ENCODE measurements at regions of chr1 and their contacts with region 1.

Region 1: GRCh38 chr1:220281159-220281574 is 8.9 kb upstream of the RAB3GAP2 start:
- DNase-seq: no peak
- ATAC-seq: peak; percentile 86
- H3K4me3 Mint-ChIP-seq: no peak overlapping the region
- H3K27ac Mint-ChIP-seq: no peak overlapping the region
- H3K4me1 Mint-ChIP-seq: no peaks in the 10 kb centered on the region
- H3K27me3 Mint-ChIP-seq: no peaks in the 10 kb centered on the region
- CTCF ChIP-seq: no peak

Region 2: DNA sequence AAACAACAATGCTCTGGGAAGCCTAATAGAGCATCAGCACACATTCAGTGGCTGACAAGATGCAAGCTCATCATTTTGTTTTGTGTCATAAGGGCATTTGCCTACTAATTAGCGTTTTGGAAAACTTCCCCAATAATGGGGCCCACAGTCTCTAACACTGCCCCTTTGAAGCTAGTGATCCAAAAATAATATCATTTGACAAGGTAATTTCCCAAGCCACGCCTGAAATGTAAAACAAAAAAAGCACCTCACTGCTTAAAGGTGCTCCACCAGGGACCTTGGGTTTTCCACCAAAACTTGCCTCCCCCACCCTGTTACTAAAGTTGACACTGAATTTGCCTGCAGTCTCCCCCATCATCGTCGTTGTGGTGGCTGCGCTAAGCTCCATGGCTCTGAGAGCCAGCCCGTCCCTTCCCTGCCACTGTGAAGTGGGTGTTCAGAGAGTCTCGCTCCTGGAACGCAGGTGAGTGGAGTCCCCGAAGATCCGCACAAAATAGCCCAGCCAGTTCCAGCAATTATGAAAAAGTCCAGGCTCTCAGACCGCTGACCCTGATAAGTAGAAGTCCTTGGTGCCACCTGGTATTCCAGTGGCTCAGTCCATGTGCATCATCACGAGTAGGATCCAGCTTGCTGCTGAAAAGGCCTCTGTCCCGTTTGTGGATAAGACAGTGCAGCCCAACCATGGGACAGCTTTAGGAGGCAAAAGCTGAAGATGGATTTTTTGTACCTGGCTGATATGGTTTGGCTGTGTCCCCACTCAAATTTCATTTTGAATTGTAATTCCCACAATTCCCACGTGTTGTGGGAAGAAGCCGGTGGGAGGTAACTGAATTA is 61.1 kb before region 1 on chr1:
- CTCF ChIA-PET with region 1: interaction called, 25 read pairs
- POLR2A ChIA-PET with region 1: no interaction called
- DNase-seq: no peak
- ATAC-seq: no peak
- H3K4me3 Mint-ChIP-seq: no peak overlapping the region
- H3K27ac Mint-ChIP-seq: peak overlapping the region; percentile 88
- H3K4me1 Mint-ChIP-seq: peaks cover 42% of the 10 kb centered on the region
- H3K27me3 Mint-ChIP-seq: no peaks in the 10 kb centered on the region
- CTCF ChIP-seq: no peak

Region 3: GRCh38 chr1:220294846-220295301 is 13.7 kb after region 1 on chr1:
- CTCF ChIA-PET with region 1: interaction called, 38 read pairs
- POLR2A ChIA-PET with region 1: no interaction called
- DNase-seq: no peak
- ATAC-seq: no peak
- H3K4me3 Mint-ChIP-seq: no peak overlapping the region
- H3K27ac Mint-ChIP-seq: no peak overlapping the region
- H3K4me1 Mint-ChIP-seq: peaks cover 37% of the 10 kb centered on the region
- H3K27me3 Mint-ChIP-seq: no peaks in the 10 kb centered on the region
- CTCF ChIP-seq: no peak

Region 4: DNA sequence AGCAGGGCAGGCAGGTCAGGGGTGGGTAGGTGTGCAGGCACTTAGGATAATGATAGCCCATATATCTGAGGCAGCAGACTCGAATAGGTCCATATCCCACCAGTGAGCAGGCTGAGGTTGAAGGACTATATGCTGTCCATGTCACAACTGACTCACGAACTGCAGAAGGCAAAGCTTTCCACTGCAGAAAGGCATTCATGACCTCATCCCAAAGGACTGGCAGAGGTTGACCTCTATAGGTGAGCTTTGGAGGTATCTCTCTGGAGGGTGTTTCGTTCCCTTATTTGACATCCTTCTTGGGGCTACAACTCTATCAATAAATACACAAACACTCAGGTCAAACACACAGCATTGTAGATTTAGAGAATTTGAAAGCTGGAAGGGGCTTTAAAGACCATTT is 204.0 kb after region 1 on chr1:
- CTCF ChIA-PET with region 1: interaction called, 15 read pairs
- POLR2A ChIA-PET with region 1: interaction called, 3 read pairs
- DNase-seq: no peak
- ATAC-seq: peak; percentile 82
- H3K4me3 Mint-ChIP-seq: no peak overlapping the region
- H3K27ac Mint-ChIP-seq: no peak overlapping the region
- H3K4me1 Mint-ChIP-seq: peaks cover 10% of the 10 kb centered on the region; the same call in 1 of the 2 replicates
- H3K27me3 Mint-ChIP-seq: peaks cover 2% of the 10 kb centered on the region; the same call in 1 of the 2 replicates
- CTCF ChIP-seq: no peak

Region 5: GRCh38 chr1:220690140-220691025 is 409.2 kb after region 1 on chr1 and contains the start of gene C1orf115:
- CTCF ChIA-PET with region 1: interaction called, 10 read pairs
- POLR2A ChIA-PET with region 1: no interaction called
- DNase-seq: peak; percentile 89
- ATAC-seq: peak; percentile 90
- H3K4me3 Mint-ChIP-seq: peak within 1 kb of the TSS; percentile 93
- H3K27ac Mint-ChIP-seq: 0 out of 2 replicates have a peak within 1 kb of the TSS, but pooled peaks have one; percentile 60
- H3K4me1 Mint-ChIP-seq: peaks cover 15% of the 10 kb centered on the region
- H3K27me3 Mint-ChIP-seq: peaks cover 28% of the 10 kb centered on the region
- CTCF ChIP-seq: peak; percentile 99
- total RNA-seq, gene C1orf115: 10.0 to 11.5 TPM (median 11.1 TPM) in 3 replicates